MCF 10A (cell line): ENCODE measurements at regions of chr7 and their contacts with region 1.

Region 1: GRCh38 chr7:82810558-82811259 is 352.0 kb downstream of the PCLO start:
- DNase-seq: peak; percentile 45
- H3K4me3 Mint-ChIP-seq: no peak overlapping the region
- H3K27ac Mint-ChIP-seq: no peak overlapping the region
- H3K4me1 Mint-ChIP-seq: no peaks in the 10 kb centered on the region
- H3K27me3 Mint-ChIP-seq: peaks cover 29% of the 10 kb centered on the region
- CTCF ChIP-seq: peak; percentile 57

Region 2: GRCh38 chr7:82442492-82443035 is 368.1 kb before region 1 on chr7:
- CTCF ChIA-PET with region 1: no interaction called
- POLR2A ChIA-PET with region 1: no interaction called
- intact Hi-C with region 1: no loop called
- DNase-seq: no peak
- H3K4me3 Mint-ChIP-seq: peak overlapping the region; percentile 23
- H3K27ac Mint-ChIP-seq: no peak overlapping the region
- H3K4me1 Mint-ChIP-seq: no peaks in the 10 kb centered on the region
- H3K27me3 Mint-ChIP-seq: peaks cover 62% of the 10 kb centered on the region
- CTCF ChIP-seq: no peak

Region 3: DNA sequence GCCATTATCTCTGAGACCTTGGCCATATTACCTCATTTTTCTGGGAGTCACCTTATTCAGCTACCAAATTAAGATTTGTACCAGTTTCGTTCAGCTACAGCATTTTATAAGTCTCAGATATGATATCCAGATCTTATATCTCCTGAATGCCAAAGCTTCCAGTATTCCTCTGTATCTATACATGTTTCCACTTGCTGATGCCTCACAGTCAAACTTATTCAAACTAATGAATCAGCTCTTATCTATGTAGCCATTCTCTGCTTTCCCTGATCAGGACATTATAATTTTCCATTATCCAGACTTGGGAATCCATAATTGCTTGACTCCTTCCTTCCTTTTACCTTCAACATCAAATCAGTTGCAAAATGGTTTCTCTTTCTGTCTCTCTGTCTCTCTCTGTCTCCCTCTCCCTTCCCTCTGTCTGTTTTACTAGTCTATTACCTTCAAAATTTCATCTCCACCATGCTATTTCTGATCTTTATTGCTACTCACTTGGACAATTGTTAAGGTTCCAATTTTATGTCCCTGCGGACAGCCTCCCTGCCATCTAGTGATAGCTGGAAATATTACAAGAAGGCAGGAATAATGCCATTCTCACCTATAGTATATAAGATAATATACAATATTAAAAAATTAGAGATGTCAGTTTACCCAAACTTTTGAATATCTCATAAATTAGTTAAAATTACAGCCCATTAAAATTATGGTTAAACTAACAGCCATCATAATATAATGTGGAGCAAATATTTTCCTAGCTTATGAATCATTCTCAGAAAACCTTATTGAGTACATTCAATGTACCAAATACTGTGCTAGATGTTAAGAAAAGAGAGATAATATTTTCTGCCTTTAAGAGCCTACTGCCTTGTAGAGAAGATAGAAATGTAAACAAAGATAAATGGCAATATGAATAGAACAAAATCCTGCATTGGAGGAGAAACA is 262.1 kb after region 1 on chr7:
- CTCF ChIA-PET with region 1: interaction called, 17 read pairs
- POLR2A ChIA-PET with region 1: no interaction called
- intact Hi-C with region 1: loop called (anchors 10 kb)
- DNase-seq: peak; percentile 5
- H3K4me3 Mint-ChIP-seq: no peak overlapping the region
- H3K27ac Mint-ChIP-seq: no peak overlapping the region
- H3K4me1 Mint-ChIP-seq: no peaks in the 10 kb centered on the region
- H3K27me3 Mint-ChIP-seq: no peaks in the 10 kb centered on the region
- CTCF ChIP-seq: no peak

Region 4: GRCh38 chr7:83162402-83163256 is 351.9 kb after region 1 on chr7 and contains the start of gene PCLO:
- CTCF ChIA-PET with region 1: interaction called, 4 read pairs
- POLR2A ChIA-PET with region 1: interaction called, 3 read pairs
- intact Hi-C with region 1: loop called (anchors 5 kb)
- DNase-seq: peak; percentile 62
- H3K4me3 Mint-ChIP-seq: peak within 1 kb of the TSS; percentile 83
- H3K27ac Mint-ChIP-seq: peak within 1 kb of the TSS; percentile 23
- H3K4me1 Mint-ChIP-seq: peaks cover 7% of the 10 kb centered on the region
- H3K27me3 Mint-ChIP-seq: no peaks in the 10 kb centered on the region
- CTCF ChIP-seq: no peak
- total RNA-seq, gene PCLO: 2.0 and 2.3 TPM in 2 replicates

Region 5: GRCh38 chr7:83271212-83272099 is 460.7 kb after region 1 on chr7:
- CTCF ChIA-PET with region 1: interaction called, 55 read pairs
- POLR2A ChIA-PET with region 1: no interaction called
- intact Hi-C with region 1: loop called (anchors 1 kb)
- DNase-seq: peak; percentile 30
- H3K4me3 Mint-ChIP-seq: no peak overlapping the region
- H3K27ac Mint-ChIP-seq: no peak overlapping the region
- H3K4me1 Mint-ChIP-seq: no peaks in the 10 kb centered on the region
- H3K27me3 Mint-ChIP-seq: peaks cover 97% of the 10 kb centered on the region
- CTCF ChIP-seq: peak; percentile 33